ENCODE measurements at regions of chr1 and their contacts with region 1.

Region 1: GRCh38 chr1:22089787-22090186 is 37.3 kb downstream of the CDC42 start:
- DNase-seq: no peak
- ATAC-seq: no peak
- H3K4me3 Mint-ChIP-seq: peak overlapping the region; percentile 33
- H3K27ac Mint-ChIP-seq: peak overlapping the region; percentile 82
- H3K4me1 Mint-ChIP-seq: peaks cover 91% of the 10 kb centered on the region
- H3K27me3 Mint-ChIP-seq: no peaks in the 10 kb centered on the region

Region 2: DNA sequence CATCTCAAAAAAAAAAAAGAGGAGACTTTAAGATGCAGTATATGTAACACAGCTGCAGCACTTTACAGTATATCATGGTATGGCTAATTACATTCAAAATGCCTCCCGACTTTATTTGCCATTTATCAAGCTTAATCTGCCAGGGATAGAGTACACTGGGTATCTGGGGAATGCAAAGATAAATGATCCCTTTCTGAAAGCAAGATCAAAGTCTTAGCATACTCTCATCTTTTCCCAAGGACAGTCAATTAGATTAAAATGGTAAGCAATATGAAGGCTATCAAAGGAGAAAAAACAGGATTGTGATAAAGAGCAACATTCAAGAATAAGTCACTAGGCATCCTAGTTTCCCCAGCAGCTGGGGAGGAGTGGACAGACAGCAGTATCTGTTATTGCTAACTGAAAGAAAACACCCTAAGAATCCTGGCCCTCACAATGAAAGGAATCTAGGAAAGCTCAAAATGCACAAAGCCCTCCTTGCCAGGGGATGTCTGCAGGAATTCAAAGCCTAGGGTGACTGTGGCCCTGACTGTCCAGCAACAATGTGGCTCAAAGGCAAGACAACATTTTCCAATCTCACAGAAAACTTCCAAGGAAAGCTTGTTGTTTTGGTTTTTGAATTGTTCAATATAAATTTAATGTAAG is 363.9 kb before region 1 on chr1:
- CTCF ChIA-PET with region 1: no interaction called
- POLR2A ChIA-PET with region 1: no interaction called
- intact Hi-C with region 1: no loop called
- DNase-seq: no peak
- ATAC-seq: no peak
- H3K4me3 Mint-ChIP-seq: no peak overlapping the region
- H3K27ac Mint-ChIP-seq: no peak overlapping the region
- H3K4me1 Mint-ChIP-seq: no peaks in the 10 kb centered on the region
- H3K27me3 Mint-ChIP-seq: no peaks in the 10 kb centered on the region

Region 3: DNA sequence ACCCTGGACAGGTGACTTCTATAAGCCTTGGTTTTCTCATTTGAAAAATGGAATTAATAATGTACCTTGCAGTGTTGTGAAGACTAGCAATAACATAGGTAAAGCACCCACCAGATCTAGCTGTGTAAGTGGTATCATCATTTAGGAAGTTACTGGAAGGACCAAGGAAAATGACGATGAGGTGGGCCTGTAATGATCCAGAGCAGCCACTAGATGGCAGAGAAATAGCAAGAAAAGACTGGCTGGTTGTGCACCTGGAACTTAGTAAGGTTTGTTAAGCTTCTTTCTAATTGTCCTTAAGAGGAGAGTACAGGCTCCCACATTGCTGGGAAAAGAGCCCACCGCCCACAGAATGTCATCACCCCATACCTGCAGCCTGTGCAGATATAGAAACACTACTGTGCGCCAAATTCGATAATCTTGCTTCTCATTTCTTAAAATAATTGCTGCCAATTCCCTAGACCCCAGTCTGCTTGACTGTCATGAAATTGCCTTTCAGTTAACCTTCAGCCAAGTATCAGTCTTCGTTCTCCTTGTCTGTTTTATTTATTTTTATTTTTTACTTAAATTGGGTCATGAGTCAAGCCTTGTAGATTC is 15.9 kb after region 1 on chr1:
- CTCF ChIA-PET with region 1: interaction called, 6 read pairs
- POLR2A ChIA-PET with region 1: no interaction called
- intact Hi-C with region 1: loop called in 1 of 2 experiments (anchors 2 kb)
- DNase-seq: peak; percentile 41
- ATAC-seq: peak; percentile 50
- H3K4me3 Mint-ChIP-seq: no peak overlapping the region
- H3K27ac Mint-ChIP-seq: peak overlapping the region; percentile 86
- H3K4me1 Mint-ChIP-seq: peaks cover 66% of the 10 kb centered on the region
- H3K27me3 Mint-ChIP-seq: no peaks in the 10 kb centered on the region

Region 4: DNA sequence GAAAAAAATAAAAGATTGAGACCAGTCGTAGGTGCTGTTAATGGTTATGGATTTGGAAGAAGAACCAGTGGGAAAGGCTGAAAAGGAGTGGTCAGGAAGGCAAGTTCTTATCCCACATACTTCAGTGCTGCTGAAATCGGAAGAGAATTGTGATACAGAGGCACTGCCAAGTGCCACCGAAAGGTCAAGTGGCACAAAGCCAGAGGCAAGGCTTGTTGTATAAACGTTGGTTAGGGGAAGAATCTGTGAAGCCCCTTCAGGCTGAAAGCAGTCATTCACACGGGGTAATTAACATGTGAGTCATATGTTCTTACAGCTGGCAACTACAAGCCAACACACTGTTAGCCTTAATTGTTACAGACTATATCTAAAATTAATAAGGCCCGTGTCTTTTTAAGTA is 410.7 kb after region 1 on chr1:
- CTCF ChIA-PET with region 1: no interaction called
- POLR2A ChIA-PET with region 1: no interaction called
- intact Hi-C with region 1: no loop called
- DNase-seq: no peak
- ATAC-seq: no peak
- H3K4me3 Mint-ChIP-seq: no peak overlapping the region
- H3K27ac Mint-ChIP-seq: no peak overlapping the region
- H3K4me1 Mint-ChIP-seq: peaks cover 3% of the 10 kb centered on the region
- H3K27me3 Mint-ChIP-seq: no peaks in the 10 kb centered on the region